Heart right ventricle (tissue), 16 donors: ENCODE measurements at regions of chr10 and their contacts with region 1.

Region 1: DNA sequence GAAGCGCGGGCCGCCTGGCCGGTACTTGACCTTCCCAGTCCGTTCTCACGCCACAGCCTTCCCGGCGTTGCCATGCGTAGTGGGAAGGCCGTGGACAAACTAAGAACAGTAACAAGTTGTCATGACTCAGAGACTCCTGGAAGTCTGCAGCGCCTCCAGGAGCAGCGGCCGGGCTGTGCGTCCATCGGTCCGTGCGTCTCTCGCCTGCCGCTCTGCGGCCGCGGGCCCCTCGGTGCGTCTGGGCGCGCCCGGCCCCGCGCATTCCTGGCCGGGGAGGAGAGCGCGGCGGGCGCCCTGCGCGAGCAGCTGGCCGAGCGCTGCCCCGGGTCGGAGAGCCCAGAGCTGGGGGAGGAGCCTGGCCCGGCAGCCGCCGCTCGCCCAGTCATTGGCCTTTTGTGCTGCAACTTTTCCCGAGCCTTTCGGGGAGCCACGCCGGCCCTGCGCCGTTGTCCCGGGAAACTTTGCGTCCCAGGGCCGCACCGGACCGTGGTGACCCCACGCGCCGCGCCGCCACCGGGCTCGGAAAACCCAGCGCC is 123.7 kb downstream of the TACC2 start:
- DNase-seq: peak; percentile 86 to 87
- ATAC-seq: peak; percentile 74 to 91 (median 88)
- H3K4me3 ChIP-seq: peak overlapping the region; percentile 53 to 94 (median 70)
- H3K27ac ChIP-seq: peak overlapping the region; percentile 94 to 100 (median 98)
- H3K4me1 ChIP-seq: peaks cover 5 to 58% (median 50%) of the 10 kb centered on the region in 9 donors
- H3K27me3 ChIP-seq: peaks cover 0 to 30% (median 0%) of the 10 kb centered on the region in 7 donors
- CTCF ChIP-seq: peak; percentile 31 to 78 (median 50)

Region 2: DNA sequence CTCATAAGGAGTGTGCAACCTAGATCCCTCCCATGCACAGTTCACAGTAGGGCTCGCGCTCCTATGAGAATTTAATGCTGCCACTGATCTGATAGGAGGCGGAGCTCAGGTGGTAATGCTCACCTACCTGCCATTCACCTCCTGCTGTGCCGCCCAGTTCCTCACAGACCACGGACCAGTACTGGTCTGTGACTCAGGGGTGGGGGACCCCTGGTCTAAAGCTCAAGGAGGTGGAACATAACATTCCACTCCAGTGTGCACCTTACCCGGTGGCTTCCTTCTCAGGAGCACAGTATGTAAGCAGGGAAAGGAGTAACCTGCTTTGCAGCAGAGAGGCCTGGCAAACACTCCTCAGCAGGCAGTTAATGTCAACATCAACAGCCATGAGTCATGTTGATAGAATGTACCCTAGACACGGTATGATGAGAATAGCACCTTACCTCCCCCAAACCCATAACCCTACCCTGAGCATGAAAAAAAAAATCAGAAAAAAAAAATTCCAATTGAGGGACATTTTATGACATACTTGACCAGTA is 787.9 kb before region 1 on chr10:
- intact Hi-C with region 1: no loop called
- DNase-seq: no peak
- ATAC-seq: no peak
- H3K4me3 ChIP-seq: no peak overlapping the region
- H3K27ac ChIP-seq: no peak overlapping the region
- H3K4me1 ChIP-seq: no peaks in the 10 kb centered on the region
- H3K27me3 ChIP-seq: peaks cover 0 to 26% (median 3%) of the 10 kb centered on the region in 7 donors
- CTCF ChIP-seq: no peak

Region 3: GRCh38 chr10:121927841-121928527 is 184.7 kb before region 1 on chr10 and contains the start of gene ATE1:
- intact Hi-C with region 1: loop called in 4 of 10 experiments (anchors 2 to 10 kb)
- DNase-seq: peak; percentile 92 to 93
- ATAC-seq: peak; percentile 94 to 98 (median 97)
- H3K4me3 ChIP-seq: peak within 1 kb of the TSS; percentile 90 to 100 (median 97)
- H3K27ac ChIP-seq: peak within 1 kb of the TSS; percentile 97 to 100 (median 99)
- H3K4me1 ChIP-seq: peaks cover 0 to 49% (median 33%) of the 10 kb centered on the region in 9 donors
- H3K27me3 ChIP-seq: no peaks in the 10 kb centered on the region
- CTCF ChIP-seq: peak in 5 of 9 donors; percentile 6 to 40 (median 22)
- total RNA-seq, gene ATE1: 36.1 to 57.7 (median 43.2) TPM

Region 4: DNA sequence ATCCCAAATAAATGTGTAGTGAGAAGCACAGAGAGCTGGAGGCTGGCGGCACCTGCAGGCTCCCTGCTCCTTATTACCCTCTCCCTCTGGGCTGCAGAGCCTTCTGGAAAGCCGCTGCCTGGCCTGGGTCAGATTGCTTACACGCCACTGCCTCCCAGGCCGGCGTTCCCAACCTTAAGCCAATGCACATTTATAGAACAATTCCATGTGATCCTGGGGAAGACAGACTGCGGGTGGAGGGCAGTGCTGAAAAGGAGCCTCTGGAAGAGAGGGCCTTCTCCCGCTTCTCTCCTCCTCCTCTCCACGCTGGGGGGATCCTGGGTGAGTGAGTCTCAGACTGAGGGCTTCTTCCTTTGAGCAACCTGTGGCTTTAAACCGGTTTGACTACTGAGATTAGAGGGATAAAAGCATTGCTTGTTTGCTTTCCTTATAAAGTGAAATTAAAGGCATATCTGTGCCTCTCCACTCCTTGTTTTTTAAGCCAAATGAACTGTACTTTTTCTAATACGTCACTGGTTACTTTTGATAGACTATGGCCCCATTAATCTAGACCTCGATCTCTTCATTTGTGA is 118.2 kb before region 1 on chr10:
- intact Hi-C with region 1: loop called in 1 of 10 experiments (anchors 10 kb)
- DNase-seq: peak; percentile 54 to 61
- ATAC-seq: peak; percentile 67 to 89 (median 83)
- H3K4me3 ChIP-seq: peak overlapping the region; percentile 26 to 50 (median 38)
- H3K27ac ChIP-seq: peak overlapping the region; percentile 70 to 94 (median 88)
- H3K4me1 ChIP-seq: peaks cover 0 to 60% (median 13%) of the 10 kb centered on the region in 9 donors
- H3K27me3 ChIP-seq: no peaks in the 10 kb centered on the region
- CTCF ChIP-seq: peak in 2 of 9 donors; percentile 23 to 24

Region 5: GRCh38 chr10:122056431-122057094 is 56.1 kb before region 1 on chr10:
- intact Hi-C with region 1: loop called in 9 of 10 experiments (anchors 1 to 10 kb)
- DNase-seq: no peak
- ATAC-seq: no peak
- H3K4me3 ChIP-seq: no peak overlapping the region
- H3K27ac ChIP-seq: no peak overlapping the region
- H3K4me1 ChIP-seq: peaks cover 13 to 40% (median 26%) of the 10 kb centered on the region in 9 donors
- H3K27me3 ChIP-seq: no peaks in the 10 kb centered on the region
- CTCF ChIP-seq: no peak

Region 6: DNA sequence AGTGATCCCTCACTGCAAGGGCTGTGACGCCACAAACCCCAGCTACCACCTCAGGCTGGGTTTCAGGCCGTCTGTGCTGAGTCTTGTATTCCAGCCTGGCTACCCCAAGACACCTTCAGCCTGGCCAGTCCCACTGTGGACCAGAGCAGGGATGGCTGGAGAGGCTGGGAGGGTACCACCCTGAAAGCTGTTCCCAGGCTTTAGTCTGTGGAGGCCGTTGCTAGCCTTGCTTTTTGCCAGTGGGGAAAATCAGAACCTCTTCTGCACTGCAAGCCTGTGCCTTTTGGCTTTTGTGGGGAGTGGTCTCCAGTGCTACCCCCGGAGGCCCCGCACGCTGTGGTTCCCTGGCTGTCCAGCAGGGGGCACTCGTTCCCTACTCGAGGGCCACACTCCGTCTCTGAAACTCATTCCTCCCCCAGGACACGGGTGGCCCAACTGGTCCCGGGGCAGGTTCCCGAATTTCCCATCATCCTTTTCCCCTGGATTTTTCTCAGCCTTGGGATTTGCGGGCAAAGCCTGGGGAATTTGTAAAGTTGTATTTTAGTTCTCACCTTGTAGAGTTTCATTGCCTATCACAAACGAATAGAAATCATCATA is 30.0 kb after region 1 on chr10:
- intact Hi-C with region 1: loop called in 2 of 10 experiments (anchors 2 kb)
- DNase-seq: peak; percentile 45 to 62
- ATAC-seq: peak in 2 of 8 donors; percentile 1 to 21
- H3K4me3 ChIP-seq: no peak overlapping the region
- H3K27ac ChIP-seq: peak overlapping the region in 9 of 10 donors; percentile 82 to 94 (median 89)
- H3K4me1 ChIP-seq: peaks cover 39 to 84% (median 71%) of the 10 kb centered on the region in 9 donors
- H3K27me3 ChIP-seq: no peaks in the 10 kb centered on the region
- CTCF ChIP-seq: peak; percentile 89 to 96 (median 93)

Region 7: GRCh38 chr10:122191936-122192541 is 79.3 kb after region 1 on chr10:
- intact Hi-C with region 1: no loop called
- DNase-seq: peak in 1 of 2 donors; percentile 36
- ATAC-seq: peak; percentile 9 to 72 (median 62)
- H3K4me3 ChIP-seq: no peak overlapping the region
- H3K27ac ChIP-seq: peak overlapping the region in 5 of 10 donors; percentile 16 to 64 (median 36)
- H3K4me1 ChIP-seq: peaks cover 10 to 72% (median 41%) of the 10 kb centered on the region in 9 donors
- H3K27me3 ChIP-seq: no peaks in the 10 kb centered on the region
- CTCF ChIP-seq: no peak

Region 8: DNA sequence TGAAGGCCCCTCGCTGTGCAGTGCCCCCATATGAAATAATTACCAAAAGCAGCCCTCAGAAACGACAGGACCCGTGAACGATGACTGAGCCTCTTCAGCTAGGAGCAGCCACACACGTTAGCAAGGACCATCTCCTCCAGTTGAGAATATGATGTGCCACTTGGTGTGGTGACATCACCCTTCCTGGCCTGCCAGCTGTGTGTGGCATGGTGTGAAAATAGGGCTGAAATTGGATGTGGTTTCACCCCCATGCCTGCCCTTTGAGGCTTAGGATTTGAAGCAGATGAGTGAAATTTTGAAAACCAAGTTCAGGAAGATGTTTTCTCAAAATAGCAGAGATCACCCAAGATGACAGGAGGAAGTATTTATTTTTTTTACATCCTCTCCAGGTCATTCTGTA is 109.3 kb after region 1 on chr10:
- intact Hi-C with region 1: no loop called
- DNase-seq: no peak
- ATAC-seq: peak in 3 of 8 donors; percentile 18 to 68 (median 48)
- H3K4me3 ChIP-seq: no peak overlapping the region
- H3K27ac ChIP-seq: no peak overlapping the region
- H3K4me1 ChIP-seq: peaks cover 0 to 3% (median 0%) of the 10 kb centered on the region in 9 donors
- H3K27me3 ChIP-seq: no peaks in the 10 kb centered on the region
- CTCF ChIP-seq: no peak

Region 9: GRCh38 chr10:122525788-122526187 is 413.1 kb after region 1 on chr10:
- intact Hi-C with region 1: no loop called
- DNase-seq: no peak
- ATAC-seq: no peak
- H3K4me3 ChIP-seq: no peak overlapping the region
- H3K27ac ChIP-seq: no peak overlapping the region
- H3K4me1 ChIP-seq: peaks cover 0 to 20% (median 5%) of the 10 kb centered on the region in 9 donors
- H3K27me3 ChIP-seq: no peaks in the 10 kb centered on the region
- CTCF ChIP-seq: peak in 8 of 9 donors; percentile 12 to 52 (median 30)